Cardiac septum (tissue), 1 donor: ENCODE measurements at regions of chr10 and their contacts with region 1.

Region 1: GRCh38 chr10:128069351-128070051 is 56.7 kb downstream of the MKI67 start:
- DNase-seq: no peak

Region 2: DNA sequence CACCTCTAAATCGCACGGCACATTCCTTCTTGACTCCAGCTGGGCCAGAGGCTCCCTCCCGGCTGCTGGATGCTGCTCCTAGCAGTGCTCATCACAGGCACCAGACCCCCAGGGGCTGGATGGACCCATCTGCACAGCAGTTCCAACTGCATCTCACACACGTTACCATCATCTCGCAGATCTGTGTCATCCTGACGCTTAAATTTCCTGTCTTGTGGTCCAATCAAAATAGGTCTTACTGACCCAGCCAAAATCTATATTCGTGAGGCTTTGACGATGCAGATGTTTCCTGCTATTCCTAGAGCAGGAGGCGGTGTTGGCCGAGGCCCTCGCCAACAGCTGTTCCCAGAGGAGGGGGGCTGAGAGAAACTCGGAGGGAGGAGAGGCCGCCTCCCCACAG is 51.3 kb before region 1 on chr10:
- intact Hi-C with region 1: loop called (anchors 5 kb)
- DNase-seq: no peak

Region 3: DNA sequence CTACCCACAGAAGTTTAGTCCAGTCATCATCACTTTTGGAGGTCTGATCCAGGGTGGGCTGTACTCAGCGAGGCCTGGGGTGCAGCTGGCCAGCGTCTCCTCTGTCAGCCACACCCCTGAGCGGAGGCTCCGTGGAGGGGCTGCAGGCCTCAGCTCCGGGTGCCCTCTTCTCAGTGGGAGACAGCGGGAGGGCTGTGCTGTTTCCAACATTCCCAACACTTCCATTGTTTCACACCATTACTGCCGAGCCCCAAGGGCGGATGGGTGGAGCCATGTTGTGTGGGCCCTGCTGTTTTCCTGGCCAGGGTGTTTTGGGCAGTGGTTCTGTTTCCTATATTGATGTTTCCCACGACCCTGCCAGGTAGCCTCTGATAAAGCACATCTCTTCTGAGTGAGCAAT is 38.3 kb before region 1 on chr10:
- intact Hi-C with region 1: loop called (anchors 2 kb)
- DNase-seq: no peak